ENCODE measurements at regions of chr5 and their contacts with region 1.

Region 1: GRCh38 chr5:95600557-95600956 is 19.3 kb upstream of the GPR150 start:
- DNase-seq: no peak
- H3K4me3 ChIP-seq: no peak overlapping the region
- H3K27ac ChIP-seq: no peak overlapping the region
- H3K4me1 ChIP-seq: no peaks in the 10 kb centered on the region
- H3K27me3 ChIP-seq: no peaks in the 10 kb centered on the region
- CTCF ChIP-seq: no peak

Region 2: DNA sequence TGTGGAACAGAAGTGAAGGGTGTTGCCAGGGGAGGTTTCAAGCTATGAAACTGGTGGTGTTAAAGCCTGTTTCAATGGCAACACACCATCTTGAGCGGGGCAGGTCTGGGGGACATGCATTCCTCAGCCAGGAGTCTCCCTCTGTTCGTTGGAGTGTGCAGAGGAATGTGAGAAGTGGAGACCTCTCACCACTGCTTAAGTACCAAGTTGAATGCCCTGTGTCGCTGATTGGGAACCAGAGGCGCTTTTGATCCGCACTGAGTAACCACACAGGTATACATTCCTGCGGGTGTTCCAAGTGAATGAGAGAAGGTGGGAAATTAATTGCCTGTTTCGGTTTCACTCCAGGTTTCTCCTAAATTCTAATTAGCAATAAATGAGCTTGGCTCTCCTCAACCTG is 1442.4 kb after region 1 on chr5:
- CTCF ChIA-PET with region 1: no interaction called
- POLR2A ChIA-PET with region 1: interaction called, 24 read pairs
- intact Hi-C with region 1: no loop called
- DNase-seq: no peak
- H3K4me3 ChIP-seq: no peak overlapping the region
- H3K27ac ChIP-seq: no peak overlapping the region
- H3K4me1 ChIP-seq: no peaks in the 10 kb centered on the region
- H3K27me3 ChIP-seq: no peaks in the 10 kb centered on the region
- CTCF ChIP-seq: no peak